Stomach (tissue), 19 donors: ENCODE measurements at regions of chr12 and their contacts with region 1.

Region 1: GRCh38 chr12:114668151-114668885 is 15.7 kb downstream of the TBX3 start:
- DNase-seq: peak; percentile 82 to 92
- H3K4me3 ChIP-seq: peak overlapping the region; percentile 32 to 41 (median 32)
- H3K27ac ChIP-seq: peak overlapping the region in 4 of 5 donors; percentile 25 to 62 (median 44)
- H3K4me1 ChIP-seq: peaks cover 10 to 49% (median 39%) of the 10 kb centered on the region in 4 donors
- H3K27me3 ChIP-seq: peaks cover 15 to 100% (median 76%) of the 10 kb centered on the region in 3 donors
- CTCF ChIP-seq: peak in 5 of 7 experiments; percentile 30 to 61 (median 59)
- EP300 ChIP-seq: no peak
- POLR2A ChIP-seq: no peak

Region 2: GRCh38 chr12:114545415-114545814 is 122.9 kb before region 1 on chr12:
- intact Hi-C with region 1: no loop called
- DNase-seq: no peak
- H3K4me3 ChIP-seq: no peak overlapping the region
- H3K27ac ChIP-seq: no peak overlapping the region
- H3K4me1 ChIP-seq: no peaks in the 10 kb centered on the region
- H3K27me3 ChIP-seq: peaks cover 0 to 4% (median 0%) of the 10 kb centered on the region in 3 donors
- CTCF ChIP-seq: no peak
- EP300 ChIP-seq: no peak
- POLR2A ChIP-seq: no peak

Region 3: GRCh38 chr12:114611145-114612018 is 56.9 kb before region 1 on chr12:
- intact Hi-C with region 1: no loop called
- DNase-seq: peak in 1 of 2 donors; percentile 57
- H3K4me3 ChIP-seq: no peak overlapping the region
- H3K27ac ChIP-seq: no peak overlapping the region
- H3K4me1 ChIP-seq: no peaks in the 10 kb centered on the region
- H3K27me3 ChIP-seq: peaks cover 0 to 7% (median 0%) of the 10 kb centered on the region in 3 donors
- CTCF ChIP-seq: no peak
- EP300 ChIP-seq: no peak
- POLR2A ChIP-seq: no peak

Region 4: DNA sequence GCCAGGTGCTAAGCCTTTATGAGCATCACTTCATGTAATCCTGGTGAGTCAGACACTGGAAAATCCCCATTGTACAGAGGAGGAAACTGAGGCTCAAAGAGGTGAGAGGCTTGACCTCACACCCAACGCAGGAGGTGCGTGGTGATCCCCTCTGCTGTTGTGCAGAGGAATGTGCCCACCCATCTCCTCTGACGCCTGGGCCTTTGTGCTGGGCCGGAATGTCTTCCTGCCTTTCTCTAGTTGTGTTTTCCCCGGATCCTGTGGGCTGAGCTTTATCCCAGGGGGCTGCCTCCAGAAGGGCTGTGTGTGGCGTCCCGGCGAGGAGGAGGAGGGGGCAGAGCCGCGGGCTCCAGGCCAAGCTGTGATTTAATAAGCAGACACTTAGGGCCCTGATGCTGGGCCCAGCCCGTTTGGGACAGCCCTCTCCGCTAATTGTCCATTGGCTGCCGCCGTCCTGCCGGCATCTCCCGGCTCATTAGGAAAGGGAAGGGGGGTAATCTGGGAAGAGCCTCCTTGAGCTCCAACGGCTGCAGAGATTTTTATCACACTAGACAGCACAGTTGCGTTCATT is 955.5 kb after region 1 on chr12:
- intact Hi-C with region 1: loop called (anchors 10 kb)
- DNase-seq: peak in 1 of 2 donors; percentile 76
- H3K4me3 ChIP-seq: no peak overlapping the region
- H3K27ac ChIP-seq: no peak overlapping the region
- H3K4me1 ChIP-seq: no peaks in the 10 kb centered on the region
- H3K27me3 ChIP-seq: peaks cover 0 to 23% (median 0%) of the 10 kb centered on the region in 3 donors
- CTCF ChIP-seq: no peak
- EP300 ChIP-seq: no peak
- POLR2A ChIP-seq: no peak

Region 5: DNA sequence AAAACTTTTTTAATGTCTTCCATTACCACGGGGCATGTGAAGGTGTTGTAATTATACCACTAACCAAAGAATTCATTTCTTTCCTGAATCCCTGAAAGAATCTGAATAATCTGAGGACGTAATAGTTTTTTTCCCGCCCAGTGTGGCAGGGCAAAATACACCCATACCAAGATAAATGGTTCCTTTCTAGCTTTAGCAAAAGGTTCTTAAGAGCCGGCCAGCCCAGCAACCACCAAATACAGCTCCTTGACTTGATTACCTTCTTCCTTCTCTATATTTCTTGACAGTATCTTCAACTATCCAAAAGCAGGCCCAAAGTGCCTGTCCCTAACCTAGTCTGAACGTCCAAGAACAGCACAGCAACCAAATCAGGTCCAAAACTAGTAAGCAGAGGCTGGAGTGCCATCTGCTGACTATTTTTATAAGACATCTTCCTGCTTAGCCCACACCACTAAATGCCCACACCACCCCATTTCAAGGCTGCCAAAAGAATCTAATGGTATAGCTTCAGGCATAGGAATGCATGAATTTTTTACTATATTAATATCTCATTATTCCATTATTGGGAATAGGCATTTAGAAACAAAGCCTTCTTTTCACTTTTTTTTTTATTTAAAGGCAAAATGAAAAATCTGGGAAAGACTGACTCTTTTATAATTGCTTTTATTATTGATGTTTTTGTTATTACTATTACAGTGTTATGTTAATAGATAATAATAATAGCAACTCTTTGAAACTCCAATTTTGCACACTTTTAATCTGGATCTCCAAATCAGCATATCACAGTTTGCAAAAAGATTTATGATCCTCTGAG is 1084.8 kb after region 1 on chr12:
- intact Hi-C with region 1: loop called (anchors 5 kb)
- DNase-seq: peak; percentile 33 to 88
- H3K4me3 ChIP-seq: no peak overlapping the region
- H3K27ac ChIP-seq: no peak overlapping the region
- H3K4me1 ChIP-seq: peaks cover 0 to 8% (median 0%) of the 10 kb centered on the region in 4 donors
- H3K27me3 ChIP-seq: peaks cover 0 to 34% (median 3%) of the 10 kb centered on the region in 3 donors
- CTCF ChIP-seq: peak in 5 of 7 experiments; percentile 37 to 61 (median 56)
- EP300 ChIP-seq: no peak
- POLR2A ChIP-seq: no peak